ENCODE measurements at regions of chr16 and their contacts with region 1.

Region 1: DNA sequence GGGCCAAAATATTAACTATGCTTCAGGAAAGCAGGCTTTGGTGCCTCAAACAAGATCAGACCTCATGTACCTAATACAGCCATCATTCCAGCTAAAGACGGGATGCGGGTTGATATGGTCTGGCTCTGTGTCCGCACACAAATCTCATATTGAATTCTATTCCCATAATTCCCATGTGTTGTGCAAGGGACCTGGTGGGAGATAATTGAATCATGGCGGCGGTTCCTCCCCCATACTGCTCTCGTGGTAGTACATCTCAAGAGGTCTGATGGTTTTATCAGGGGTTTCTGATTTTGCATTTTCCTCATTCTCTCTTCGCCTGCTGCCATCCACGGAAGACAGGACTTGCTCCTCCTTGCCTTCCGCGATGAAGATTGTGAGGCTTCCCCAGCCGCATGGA is 19.1 kb upstream of the CHST6 start:
- DNase-seq: no peak
- ATAC-seq: no peak
- H3K4me3 ChIP-seq: no peak overlapping the region
- H3K4me3 Mint-ChIP-seq: no peak overlapping the region
- H3K27ac ChIP-seq: no peak overlapping the region
- H3K27ac Mint-ChIP-seq: no peak overlapping the region
- H3K4me1 ChIP-seq: peaks cover 0 to 14% of the 10 kb centered on the region in 2 experiments
- H3K4me1 Mint-ChIP-seq: peaks cover 11 to 13% (median 12%) of the 10 kb centered on the region in 3 donors
- H3K27me3 ChIP-seq: peaks cover 0 to 2% of the 10 kb centered on the region in 2 experiments
- H3K27me3 Mint-ChIP-seq: no peaks in the 10 kb centered on the region

Region 2: GRCh38 chr16:75502916-75503605 is 11.2 kb before region 1 on chr16:
- CTCF ChIA-PET with region 1: no interaction called
- POLR2A ChIA-PET with region 1: no interaction called
- DNase-seq: no peak
- ATAC-seq: no peak
- H3K4me3 ChIP-seq: no peak overlapping the region
- H3K4me3 Mint-ChIP-seq: no peak overlapping the region
- H3K27ac ChIP-seq: no peak overlapping the region
- H3K27ac Mint-ChIP-seq: no peak overlapping the region
- H3K4me1 ChIP-seq: no peaks in the 10 kb centered on the region
- H3K4me1 Mint-ChIP-seq: no peaks in the 10 kb centered on the region
- H3K27me3 ChIP-seq: peaks cover 0 to 8% of the 10 kb centered on the region in 2 experiments
- H3K27me3 Mint-ChIP-seq: peaks cover 10 to 24% of the 10 kb centered on the region in 2 donors

Region 3: GRCh38 chr16:75527825-75528299 is 13.6 kb after region 1 on chr16:
- CTCF ChIA-PET with region 1: interaction called, 6 to 10 read pairs
- POLR2A ChIA-PET with region 1: no interaction called
- DNase-seq: no peak
- ATAC-seq: no peak
- H3K4me3 ChIP-seq: no peak overlapping the region
- H3K4me3 Mint-ChIP-seq: no peak overlapping the region
- H3K27ac ChIP-seq: no peak overlapping the region
- H3K27ac Mint-ChIP-seq: no peak overlapping the region
- H3K4me1 ChIP-seq: no peaks in the 10 kb centered on the region
- H3K4me1 Mint-ChIP-seq: no peaks in the 10 kb centered on the region
- H3K27me3 ChIP-seq: peaks cover 0 to 6% of the 10 kb centered on the region in 2 experiments
- H3K27me3 Mint-ChIP-seq: peaks cover 0 to 4% of the 10 kb centered on the region in 2 donors

Measured in T-cell (primary cell).